ENCODE measurements at regions of chr11 and their contacts with region 1.

Region 1: GRCh38 chr11:22787551-22788162 is 41.9 kb downstream of the SVIP start:
- DNase-seq: peak in 1 of 5 donors; percentile 9
- H3K4me3 ChIP-seq: no peak overlapping the region
- H3K27ac ChIP-seq: no peak overlapping the region
- H3K4me1 ChIP-seq: no peaks in the 10 kb centered on the region
- H3K27me3 ChIP-seq: no peaks in the 10 kb centered on the region
- CTCF ChIP-seq: no peak
- EP300 ChIP-seq: no peak
- POLR2A ChIP-seq: no peak

Region 2: DNA sequence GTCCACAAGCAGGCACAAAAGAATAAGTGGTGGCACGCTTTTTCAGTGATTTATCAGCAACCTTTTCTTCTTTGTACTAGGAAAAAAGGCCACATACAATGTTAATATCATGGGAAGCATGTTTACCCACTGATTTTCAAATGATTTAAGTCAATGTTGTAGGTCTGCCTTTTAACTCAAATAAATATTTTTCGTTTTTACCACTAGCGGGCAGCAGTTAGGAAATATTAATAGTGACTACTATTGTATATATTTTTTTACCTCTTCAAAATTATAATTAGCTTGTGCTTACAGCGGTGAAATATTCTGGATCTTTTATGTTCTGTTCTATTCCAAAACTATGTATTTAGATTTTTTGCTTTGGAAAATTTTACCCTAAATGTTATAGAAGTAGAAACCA is 455.9 kb before region 1 on chr11:
- intact Hi-C with region 1: loop called in 1 of 4 experiments (anchors 10 kb)
- DNase-seq: no peak
- H3K4me3 ChIP-seq: no peak overlapping the region
- H3K27ac ChIP-seq: no peak overlapping the region
- H3K4me1 ChIP-seq: no peaks in the 10 kb centered on the region
- H3K27me3 ChIP-seq: no peaks in the 10 kb centered on the region
- CTCF ChIP-seq: no peak
- EP300 ChIP-seq: no peak
- POLR2A ChIP-seq: no peak

Region 3: GRCh38 chr11:22343371-22344032 is 444.2 kb before region 1 on chr11:
- intact Hi-C with region 1: loop called in 1 of 4 experiments (anchors 10 kb)
- DNase-seq: no peak
- H3K4me3 ChIP-seq: no peak overlapping the region
- H3K27ac ChIP-seq: no peak overlapping the region
- H3K4me1 ChIP-seq: no peaks in the 10 kb centered on the region
- H3K27me3 ChIP-seq: peaks cover 3% of the 10 kb centered on the region
- CTCF ChIP-seq: no peak
- EP300 ChIP-seq: no peak
- POLR2A ChIP-seq: no peak

Region 4: DNA sequence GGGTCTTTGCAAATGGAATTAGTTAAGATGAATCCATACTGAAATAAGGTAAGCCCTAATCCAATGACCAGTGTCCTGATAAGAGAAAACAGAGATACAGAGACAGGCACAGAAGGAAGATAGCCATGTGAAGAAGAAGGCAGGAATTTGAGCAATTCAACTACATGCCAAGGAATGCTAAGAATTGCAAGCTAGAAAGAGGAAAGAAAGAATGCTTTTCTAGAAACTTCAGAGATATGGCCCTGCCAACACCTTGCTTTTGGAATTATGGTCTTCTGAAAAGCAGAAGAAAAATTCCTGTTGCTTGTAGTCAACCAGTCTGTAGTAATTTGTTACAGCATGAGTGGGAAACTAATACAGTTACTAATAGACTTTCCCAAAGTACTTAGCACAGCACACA is 338.2 kb before region 1 on chr11:
- intact Hi-C with region 1: no loop called
- DNase-seq: no peak
- H3K4me3 ChIP-seq: no peak overlapping the region
- H3K27ac ChIP-seq: no peak overlapping the region
- H3K4me1 ChIP-seq: no peaks in the 10 kb centered on the region
- H3K27me3 ChIP-seq: no peaks in the 10 kb centered on the region
- CTCF ChIP-seq: no peak
- EP300 ChIP-seq: no peak
- POLR2A ChIP-seq: no peak